Esophagus squamous epithelium (tissue), 5 donors: ENCODE measurements at regions of chr17 and their contacts with region 1.

Region 1: DNA sequence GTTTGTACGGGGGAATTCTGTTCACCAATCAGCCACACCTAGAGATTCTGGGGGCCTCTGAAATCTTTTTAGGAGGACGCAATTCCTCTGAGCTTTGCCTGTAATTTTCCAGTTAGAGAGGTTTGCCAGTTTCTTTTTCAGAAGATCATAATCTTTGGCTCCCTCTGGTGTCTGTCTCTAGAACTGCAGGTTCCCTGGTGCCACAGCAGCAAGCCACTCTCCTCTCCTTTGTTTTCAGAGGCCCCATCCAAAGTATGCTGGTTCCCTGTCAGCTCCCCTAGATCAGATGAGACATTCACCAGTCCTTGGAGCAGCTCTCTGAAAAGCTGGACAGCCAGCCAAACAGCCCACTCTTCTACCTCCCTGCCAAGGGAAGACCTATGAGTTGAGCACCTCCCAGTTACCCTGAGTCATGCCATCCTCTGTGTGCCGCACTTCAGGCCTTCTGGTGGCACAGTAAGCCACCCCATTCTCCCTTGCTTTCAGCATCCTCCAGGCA is 36.1 kb downstream of the RNF112 start:
- DNase-seq: no peak
- H3K4me3 ChIP-seq: no peak overlapping the region
- H3K27ac ChIP-seq: peak overlapping the region; percentile 78 to 91 (median 86)
- H3K4me1 ChIP-seq: peaks cover 16 to 32% (median 27%) of the 10 kb centered on the region in 3 donors
- H3K27me3 ChIP-seq: no peaks in the 10 kb centered on the region
- CTCF ChIP-seq: peak; percentile 96 to 99 (median 97)
- POLR2A ChIP-seq: no peak

Region 2: DNA sequence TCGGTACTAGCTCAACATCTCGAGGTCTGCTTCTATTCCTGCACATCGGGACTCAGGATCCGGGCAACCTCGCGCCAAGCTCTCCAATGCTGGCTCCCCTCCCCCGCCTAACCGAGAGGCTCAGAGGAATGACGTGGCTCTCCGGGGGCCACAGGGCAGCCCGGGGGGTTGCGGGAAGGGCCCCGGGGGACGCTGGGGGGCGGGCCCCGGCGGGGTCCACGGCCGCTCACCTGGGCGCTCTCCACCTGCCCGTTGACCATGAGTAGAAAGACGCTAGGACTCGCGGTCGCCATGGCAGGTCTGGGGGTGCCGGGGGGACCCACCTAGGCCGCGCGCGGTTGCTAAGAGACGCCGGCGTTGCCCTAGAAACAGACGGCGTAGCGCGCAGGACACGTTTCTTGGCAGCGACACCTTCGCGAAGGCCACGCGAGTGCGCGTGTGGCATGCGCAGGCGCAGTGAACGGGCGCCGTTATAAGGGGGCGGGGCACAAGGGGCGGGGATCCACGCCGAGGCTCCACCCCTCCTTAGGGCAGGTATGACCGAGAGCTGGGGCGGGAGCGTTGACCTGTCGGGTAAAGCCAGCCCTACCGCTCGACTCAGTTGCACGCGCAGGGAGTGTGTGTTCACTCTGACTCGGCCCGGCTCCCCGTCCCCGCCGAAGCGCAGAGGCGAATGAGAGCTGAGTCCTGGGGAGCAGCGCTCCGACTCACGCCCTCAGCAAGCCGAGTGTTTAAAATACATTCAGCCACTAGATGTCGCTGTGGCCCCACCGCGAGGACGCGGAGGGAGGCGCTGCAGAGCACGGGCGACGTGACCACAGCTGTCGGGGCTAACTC is 84.6 kb before region 1 on chr17 and contains the start of gene B9D1:
- intact Hi-C with region 1: loop called (anchors 5 kb)
- DNase-seq: peak; percentile 59
- H3K4me3 ChIP-seq: peak within 1 kb of the TSS; percentile 43 to 85 (median 73)
- H3K27ac ChIP-seq: peak within 1 kb of the TSS; percentile 78 to 93 (median 89)
- H3K4me1 ChIP-seq: peaks cover 10 to 35% (median 14%) of the 10 kb centered on the region in 3 donors
- H3K27me3 ChIP-seq: no peaks in the 10 kb centered on the region
- CTCF ChIP-seq: peak; percentile 97 to 99 (median 98)
- POLR2A ChIP-seq: peak in 1 of 4 donors; percentile 37
- total RNA-seq, gene B9D1: 9.2 to 24.5 (median 13.0) TPM

Region 3: DNA sequence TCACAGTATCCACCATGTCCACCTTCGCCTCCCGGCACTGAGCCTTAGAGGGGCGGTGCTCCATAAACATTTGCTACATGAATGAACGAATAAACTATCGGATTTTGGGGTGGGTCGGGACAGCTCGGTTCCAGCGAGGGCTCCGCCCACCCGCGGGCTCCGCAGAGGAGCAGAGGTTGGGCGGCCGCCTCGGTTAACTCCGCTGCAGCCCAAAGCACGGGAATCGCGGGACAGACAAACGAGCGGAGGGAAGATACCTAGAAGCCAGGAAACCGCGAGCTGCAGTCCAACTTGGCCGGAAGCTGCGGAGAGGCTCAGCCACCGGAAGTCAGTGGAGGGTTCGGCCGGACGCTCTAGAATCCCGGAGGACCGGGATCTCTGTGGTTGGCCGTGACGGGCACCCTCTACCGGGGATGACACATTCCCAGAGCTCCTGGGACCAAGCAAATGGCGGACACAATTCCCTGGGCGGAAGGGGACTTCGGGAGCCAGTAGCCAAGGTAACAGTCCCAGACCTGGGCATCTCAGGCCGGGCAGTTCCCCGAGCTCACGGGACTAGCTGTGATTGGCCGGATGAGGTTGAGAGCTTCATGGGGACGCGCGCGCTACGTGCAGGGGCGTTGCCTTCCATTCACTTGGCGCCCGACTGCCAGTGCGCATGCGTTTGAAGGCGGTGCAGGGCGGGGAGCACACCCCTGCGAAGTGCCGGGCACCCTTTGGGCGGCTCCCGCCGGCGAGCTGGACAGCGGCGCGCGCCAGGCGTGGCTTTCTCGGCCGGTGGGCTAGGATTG is 69.3 kb before region 1 on chr17:
- intact Hi-C with region 1: loop called (anchors 5 kb)
- DNase-seq: peak; percentile 93
- H3K4me3 ChIP-seq: peak overlapping the region; percentile 59 to 89 (median 75)
- H3K27ac ChIP-seq: peak overlapping the region; percentile 90 to 99 (median 96)
- H3K4me1 ChIP-seq: peaks cover 13 to 61% (median 23%) of the 10 kb centered on the region in 3 donors
- H3K27me3 ChIP-seq: no peaks in the 10 kb centered on the region
- CTCF ChIP-seq: peak in 2 of 6 experiments; percentile 4 to 23
- POLR2A ChIP-seq: peak in 3 of 4 donors; percentile 54 to 76 (median 63)